ENCODE measurements at regions of chr7 and their contacts with region 1.

Region 1: GRCh38 chr7:97027427-97028234 is 3.0 kb upstream of the DLX5 start:
- DNase-seq: peak; percentile 83
- H3K4me3 Mint-ChIP-seq: peak overlapping the region; percentile 56
- H3K27ac Mint-ChIP-seq: no peak overlapping the region
- H3K4me1 Mint-ChIP-seq: peaks cover 44% of the 10 kb centered on the region
- H3K27me3 Mint-ChIP-seq: peaks cover 62% of the 10 kb centered on the region

Region 2: DNA sequence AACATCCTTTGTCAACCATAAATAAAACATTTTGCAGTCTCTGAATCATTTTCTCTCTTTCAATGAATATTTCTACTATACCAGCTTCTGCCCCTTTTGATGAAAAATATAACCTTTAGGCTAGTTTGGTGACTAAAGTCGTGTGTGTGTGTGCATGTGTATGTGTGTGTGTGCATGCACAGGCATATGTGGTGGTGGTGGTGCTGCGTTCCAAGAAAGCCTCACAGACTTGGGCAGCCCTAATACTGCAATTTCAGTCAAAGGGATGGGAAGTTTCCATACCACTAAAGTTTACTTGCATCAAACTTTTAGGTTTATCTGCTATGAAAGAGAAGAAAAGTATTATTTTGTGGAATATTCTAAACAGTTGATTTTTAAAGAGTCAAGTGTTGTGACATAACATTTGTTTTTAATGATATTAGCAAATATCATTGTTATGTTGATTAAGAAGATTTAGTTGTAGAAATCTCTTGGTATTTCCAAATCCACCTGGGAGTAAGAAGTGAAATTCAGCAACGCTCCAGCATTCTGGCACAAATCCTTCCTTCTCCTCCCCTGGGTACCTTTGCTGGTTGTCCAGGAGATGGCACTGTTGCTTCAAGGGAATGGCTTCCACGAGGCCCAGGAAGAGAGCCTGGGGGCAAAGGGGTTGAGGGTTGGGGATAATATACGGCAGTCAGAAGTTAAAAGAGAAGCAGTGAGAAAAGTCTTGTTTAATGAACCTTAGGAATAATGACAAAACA is 1500.4 kb before region 1 on chr7:
- CTCF ChIA-PET with region 1: no interaction called
- intact Hi-C with region 1: loop called (anchors 2 kb)
- DNase-seq: peak; percentile 15
- H3K4me3 Mint-ChIP-seq: no peak overlapping the region
- H3K27ac Mint-ChIP-seq: no peak overlapping the region
- H3K4me1 Mint-ChIP-seq: no peaks in the 10 kb centered on the region
- H3K27me3 Mint-ChIP-seq: peaks cover 8% of the 10 kb centered on the region

Region 3: DNA sequence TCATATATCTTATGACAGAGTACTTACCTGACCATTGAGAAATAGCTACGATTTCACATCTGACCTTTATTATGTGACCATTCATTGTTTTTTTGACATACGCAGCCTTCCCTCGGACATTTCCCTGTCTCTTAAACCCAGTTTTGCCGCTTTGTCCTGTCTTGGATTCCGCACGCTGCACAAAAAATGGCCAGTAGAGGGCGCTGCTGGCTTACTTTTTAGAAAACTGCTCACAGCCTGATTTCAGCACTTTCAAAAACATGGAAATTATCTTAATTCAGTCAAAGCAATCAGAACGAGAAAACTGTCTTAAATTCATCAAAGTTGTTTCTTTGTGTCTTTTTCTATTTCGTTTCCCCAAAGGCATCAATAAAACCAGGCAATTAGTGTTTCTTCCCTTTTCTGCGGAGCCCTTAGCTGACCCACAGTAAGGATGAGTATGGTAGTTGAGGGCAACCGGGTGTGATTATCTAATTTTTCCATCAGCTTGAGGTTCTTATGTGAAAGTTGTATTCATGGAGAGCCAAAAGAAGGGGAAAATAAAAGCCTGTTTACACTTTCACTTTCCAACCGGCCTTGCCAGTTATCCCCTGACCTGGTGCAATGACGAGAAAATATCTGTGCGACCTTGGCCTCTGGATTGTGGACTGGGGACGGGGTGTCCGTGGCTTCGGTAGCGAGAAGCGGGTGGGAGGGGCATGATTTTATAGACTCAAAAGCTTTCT is 1110.9 kb before region 1 on chr7:
- CTCF ChIA-PET with region 1: interaction called, 29 read pairs
- intact Hi-C with region 1: loop called (anchors 1 kb)
- DNase-seq: peak; percentile 85
- H3K4me3 Mint-ChIP-seq: no peak overlapping the region
- H3K27ac Mint-ChIP-seq: no peak overlapping the region
- H3K4me1 Mint-ChIP-seq: peaks cover 3% of the 10 kb centered on the region
- H3K27me3 Mint-ChIP-seq: peaks cover 24% of the 10 kb centered on the region

Region 4: DNA sequence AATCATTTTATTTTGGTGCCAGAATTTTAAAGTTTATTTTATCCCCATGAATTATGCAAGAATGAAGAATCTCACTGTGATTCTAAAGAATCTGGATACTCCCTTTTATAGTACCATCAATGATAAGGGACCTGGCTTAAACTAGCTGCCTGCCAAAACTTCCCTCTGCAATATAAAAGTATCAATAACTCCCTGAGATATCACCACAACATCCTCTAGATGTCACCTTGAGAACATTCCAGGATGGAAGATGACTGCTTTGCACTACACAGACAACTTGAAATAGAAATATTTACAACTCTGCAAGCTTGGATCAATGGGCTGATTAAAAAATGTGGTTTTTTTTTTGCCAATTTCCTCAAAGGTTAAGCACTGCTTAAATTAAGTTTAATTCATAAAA is 847.8 kb before region 1 on chr7:
- CTCF ChIA-PET with region 1: no interaction called
- intact Hi-C with region 1: loop called (anchors 1 kb)
- DNase-seq: no peak
- H3K4me3 Mint-ChIP-seq: no peak overlapping the region
- H3K27ac Mint-ChIP-seq: no peak overlapping the region
- H3K4me1 Mint-ChIP-seq: no peaks in the 10 kb centered on the region
- H3K27me3 Mint-ChIP-seq: no peaks in the 10 kb centered on the region

Region 5: DNA sequence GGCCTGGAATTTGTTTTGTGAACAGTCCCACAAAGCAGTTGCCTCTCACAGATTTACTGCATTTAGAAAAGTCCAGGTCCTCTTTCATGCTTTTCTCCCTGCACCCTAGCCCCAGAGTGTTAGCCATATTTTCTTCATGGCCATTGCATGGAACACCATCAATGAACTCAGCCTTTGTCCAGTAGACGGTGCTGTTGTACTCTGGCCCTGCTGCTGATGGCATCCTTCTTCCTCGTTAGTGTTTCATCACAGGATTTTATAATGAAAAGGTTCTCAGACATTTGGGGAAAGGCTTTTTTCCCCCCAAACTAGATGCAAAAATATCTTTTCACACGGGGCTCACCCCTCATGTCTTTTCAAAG is 612.7 kb before region 1 on chr7:
- CTCF ChIA-PET with region 1: interaction called, 8 read pairs
- intact Hi-C with region 1: loop called (anchors 1 kb)
- DNase-seq: peak; percentile 69
- H3K4me3 Mint-ChIP-seq: no peak overlapping the region
- H3K27ac Mint-ChIP-seq: no peak overlapping the region
- H3K4me1 Mint-ChIP-seq: no peaks in the 10 kb centered on the region
- H3K27me3 Mint-ChIP-seq: peaks cover 18% of the 10 kb centered on the region

Region 6: GRCh38 chr7:96709381-96710228 is 318.0 kb before region 1 on chr7 and contains the start of gene SEM1:
- CTCF ChIA-PET with region 1: no interaction called
- intact Hi-C with region 1: loop called (anchors 2 kb)
- DNase-seq: peak; percentile 77
- H3K4me3 Mint-ChIP-seq: peak within 1 kb of the TSS; percentile 92
- H3K27ac Mint-ChIP-seq: peak within 1 kb of the TSS; percentile 93
- H3K4me1 Mint-ChIP-seq: peaks cover 27% of the 10 kb centered on the region
- H3K27me3 Mint-ChIP-seq: peaks cover 4% of the 10 kb centered on the region
- total RNA-seq, gene SEM1: 37.7 to 47.5 TPM

Region 7: DNA sequence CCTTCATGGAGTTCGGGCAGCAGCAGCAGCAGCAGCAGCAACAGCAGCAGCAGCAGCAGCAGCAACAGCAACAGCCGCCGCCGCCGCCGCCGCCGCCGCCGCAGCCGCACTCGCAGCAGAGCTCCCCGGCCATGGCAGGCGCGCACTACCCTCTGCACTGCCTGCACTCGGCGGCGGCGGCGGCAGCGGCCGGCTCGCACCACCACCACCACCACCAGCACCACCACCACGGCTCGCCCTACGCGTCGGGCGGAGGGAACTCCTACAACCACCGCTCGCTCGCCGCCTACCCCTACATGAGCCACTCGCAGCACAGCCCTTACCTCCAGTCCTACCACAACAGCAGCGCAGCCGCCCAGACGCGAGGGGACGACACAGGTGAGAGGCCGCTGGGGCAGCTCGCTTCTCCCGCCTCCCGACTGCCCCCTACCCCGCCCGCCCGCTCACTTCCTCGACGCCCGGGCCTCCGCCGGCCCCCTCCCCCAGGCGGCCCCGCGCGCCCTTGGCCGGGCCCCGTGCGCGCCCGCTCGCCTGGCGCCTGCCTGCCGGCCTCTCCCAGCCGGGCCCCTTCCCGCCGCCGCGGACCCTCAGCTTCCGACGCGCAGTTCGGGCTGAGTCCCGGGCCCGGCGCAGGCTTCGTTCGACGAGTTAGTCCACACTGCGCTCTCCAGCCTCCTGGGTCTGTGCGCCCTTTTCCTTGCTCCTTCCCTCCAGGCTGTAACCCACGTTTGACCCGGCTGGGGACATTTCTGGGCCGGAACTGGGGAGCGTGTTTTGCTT is 21.4 kb before region 1 on chr7:
- CTCF ChIA-PET with region 1: interaction called, 6 read pairs
- intact Hi-C with region 1: loop called (anchors 1 kb)
- DNase-seq: peak; percentile 42
- H3K4me3 Mint-ChIP-seq: peak overlapping the region; percentile 72
- H3K27ac Mint-ChIP-seq: no peak overlapping the region
- H3K4me1 Mint-ChIP-seq: peaks cover 19% of the 10 kb centered on the region
- H3K27me3 Mint-ChIP-seq: peaks cover 85% of the 10 kb centered on the region

Measured in activated naive CD4-positive, alpha-beta T cell treated with anti-CD3 and anti-CD28 coated beads for 36 hours (primary cell).